Activated naive CD4-positive, alpha-beta T cell treated with anti-CD3 and anti-CD28 coated beads, Interleukin-2, amount 10 ng/mL, durations not matched to agents 7 days and 5 days (primary cell): ENCODE measurements at regions of chr5 and their contacts with region 1.

Region 1: GRCh38 chr5:82165740-82166530 is 112.2 kb downstream of the RPS23 start:
- DNase-seq: peak; percentile 54
- H3K4me3 Mint-ChIP-seq: no peak overlapping the region
- H3K27ac Mint-ChIP-seq: no peak overlapping the region
- H3K4me1 Mint-ChIP-seq: no peaks in the 10 kb centered on the region
- H3K27me3 Mint-ChIP-seq: no peaks in the 10 kb centered on the region

Region 2: DNA sequence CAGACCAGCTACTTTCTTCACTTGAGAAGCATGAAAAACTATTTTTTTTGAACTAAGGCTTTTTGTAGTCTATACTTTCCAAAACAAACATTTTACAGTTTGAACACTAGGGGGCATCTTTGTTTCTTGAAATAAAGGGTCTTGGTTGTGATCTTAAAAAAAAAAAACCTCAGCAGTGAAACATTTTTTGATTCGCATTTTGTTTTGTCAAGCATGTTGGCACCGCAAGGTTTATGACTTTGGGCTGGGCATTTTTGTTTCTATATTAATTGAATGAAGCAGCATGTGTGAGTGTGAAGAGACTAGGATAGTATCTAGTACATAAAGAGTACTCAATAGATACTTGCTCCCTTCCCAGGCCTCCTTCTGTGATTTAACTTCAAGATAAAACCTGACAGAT is 740.4 kb before region 1 on chr5:
- CTCF ChIA-PET with region 1: interaction called, 13 read pairs
- DNase-seq: no peak
- H3K4me3 Mint-ChIP-seq: no peak overlapping the region
- H3K27ac Mint-ChIP-seq: no peak overlapping the region
- H3K4me1 Mint-ChIP-seq: peaks cover 12% of the 10 kb centered on the region
- H3K27me3 Mint-ChIP-seq: no peaks in the 10 kb centered on the region

Region 3: GRCh38 chr5:82054004-82054710 is 111.8 kb before region 1 on chr5:
- CTCF ChIA-PET with region 1: no interaction called
- DNase-seq: no peak
- H3K4me3 Mint-ChIP-seq: no peak overlapping the region
- H3K27ac Mint-ChIP-seq: no peak overlapping the region
- H3K4me1 Mint-ChIP-seq: no peaks in the 10 kb centered on the region
- H3K27me3 Mint-ChIP-seq: no peaks in the 10 kb centered on the region